ENCODE measurements at regions of chr3 and their contacts with region 1.

Region 1: GRCh38 chr3:157532529-157533297 is 29.5 kb upstream of the VEPH1 start:
- DNase-seq: peak in 1 of 2 experiments; percentile 21
- H3K4me3 ChIP-seq: no peak overlapping the region
- H3K27ac ChIP-seq: peak overlapping the region; percentile 37; the same call in 1 of the 2 replicates
- H3K4me1 ChIP-seq: peaks cover 0 to 3% (median 1%) of the 10 kb centered on the region in 4 experiments; a peak in 2 of 7 replicates
- H3K27me3 ChIP-seq: no peaks in the 10 kb centered on the region
- CTCF ChIP-seq: peak in 2 of 3 experiments; percentile 79 to 80; a peak in 3 of 4 replicates
- EP300 ChIP-seq: no peak
- POLR2A ChIP-seq: no peak
- RAD21 ChIP-seq: peak; percentile 89 to 92

Region 2: DNA sequence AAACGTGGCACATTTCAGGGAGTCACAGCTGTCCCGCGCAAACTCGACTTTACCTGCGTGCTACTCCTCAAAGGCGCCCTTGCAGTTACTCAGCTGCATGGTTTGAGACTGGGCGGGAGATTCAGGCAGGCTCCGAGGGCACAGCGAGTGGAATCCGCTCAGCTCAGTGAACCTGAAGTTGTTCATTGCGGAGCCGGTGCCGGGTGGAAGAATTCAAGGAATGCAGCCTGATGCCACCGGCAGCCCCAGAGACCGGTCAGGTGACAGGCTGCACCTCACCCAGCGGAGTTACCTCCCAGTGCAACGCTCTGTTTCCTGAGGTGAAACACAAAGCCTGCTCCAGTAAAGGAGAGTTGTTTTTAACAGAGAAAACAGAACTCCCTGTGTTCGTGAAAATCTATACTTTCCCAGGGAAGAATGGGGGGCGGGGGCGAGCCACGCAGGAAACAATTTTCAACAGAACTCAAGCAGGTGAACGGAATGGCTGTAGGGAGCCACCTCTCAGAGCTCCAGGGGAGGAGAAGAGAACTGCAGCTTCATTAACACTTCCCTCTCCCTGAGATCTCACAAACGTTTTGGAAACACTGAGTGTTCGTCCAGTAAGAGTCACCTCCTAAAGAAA is 33.3 kb before region 1 on chr3:
- CTCF ChIA-PET with region 1: interaction called, 31 read pairs
- POLR2A ChIA-PET with region 1: interaction called, 6 read pairs
- DNase-seq: peak; percentile 74 to 83
- H3K4me3 ChIP-seq: peak overlapping the region; percentile 48 to 55 (median 50)
- H3K27ac ChIP-seq: peak overlapping the region; percentile 79
- H3K4me1 ChIP-seq: peaks cover 4 to 21% (median 18%) of the 10 kb centered on the region in 4 experiments; a peak in 5 of 7 replicates
- H3K27me3 ChIP-seq: no peaks in the 10 kb centered on the region
- CTCF ChIP-seq: no peak
- EP300 ChIP-seq: peak in 1 of 2 experiments; percentile 65; a peak in 1 of 3 replicates
- POLR2A ChIP-seq: peak in 1 of 2 experiments; percentile 91; a peak in 2 of 3 replicates
- RAD21 ChIP-seq: peak in 1 of 2 experiments; percentile 6; a peak in 2 of 4 replicates

Region 3: DNA sequence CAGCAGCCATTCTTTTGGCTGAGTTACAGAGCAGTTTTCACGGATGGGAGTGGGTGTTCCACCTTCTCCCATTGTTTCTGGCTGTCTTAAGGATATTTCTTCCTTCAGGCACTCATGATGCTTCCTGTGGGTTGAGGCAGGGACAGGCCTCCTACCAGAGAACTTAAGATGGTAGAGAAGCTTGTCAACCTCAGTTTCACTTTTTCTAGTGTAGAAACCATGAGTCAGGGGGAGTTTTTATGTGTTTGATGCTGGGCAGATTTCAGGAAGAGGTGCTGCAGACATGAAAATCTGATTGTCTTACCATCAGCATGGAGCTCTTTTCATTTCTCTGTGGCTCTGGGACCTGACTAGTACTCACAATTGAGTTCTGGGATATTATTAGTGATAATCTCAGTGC is 19.2 kb after region 1 on chr3:
- CTCF ChIA-PET with region 1: interaction called, 10 read pairs
- POLR2A ChIA-PET with region 1: no interaction called
- DNase-seq: no peak
- H3K4me3 ChIP-seq: no peak overlapping the region
- H3K27ac ChIP-seq: no peak overlapping the region
- H3K4me1 ChIP-seq: no peaks in the 10 kb centered on the region
- H3K27me3 ChIP-seq: no peaks in the 10 kb centered on the region
- CTCF ChIP-seq: no peak
- EP300 ChIP-seq: no peak
- POLR2A ChIP-seq: no peak
- RAD21 ChIP-seq: no peak

Region 4: GRCh38 chr3:157572559-157573270 is 40.0 kb after region 1 on chr3:
- CTCF ChIA-PET with region 1: interaction called, 116 read pairs
- POLR2A ChIA-PET with region 1: interaction called, 16 read pairs
- DNase-seq: no peak
- H3K4me3 ChIP-seq: no peak overlapping the region
- H3K27ac ChIP-seq: no peak overlapping the region
- H3K4me1 ChIP-seq: no peaks in the 10 kb centered on the region
- H3K27me3 ChIP-seq: no peaks in the 10 kb centered on the region
- CTCF ChIP-seq: peak in 2 of 3 experiments; percentile 64 to 75; a peak in 3 of 4 replicates
- EP300 ChIP-seq: no peak
- POLR2A ChIP-seq: no peak
- RAD21 ChIP-seq: peak; percentile 68 to 72

Region 5: GRCh38 chr3:157594413-157594812 is 61.7 kb after region 1 on chr3:
- CTCF ChIA-PET with region 1: interaction called, 29 read pairs
- POLR2A ChIA-PET with region 1: no interaction called
- DNase-seq: no peak
- H3K4me3 ChIP-seq: no peak overlapping the region
- H3K27ac ChIP-seq: no peak overlapping the region
- H3K4me1 ChIP-seq: no peaks in the 10 kb centered on the region
- H3K27me3 ChIP-seq: no peaks in the 10 kb centered on the region
- CTCF ChIP-seq: peak; percentile 44 to 55 (median 54)
- EP300 ChIP-seq: no peak
- POLR2A ChIP-seq: no peak
- RAD21 ChIP-seq: peak in 1 of 2 experiments; percentile 34; a peak in 1 of 4 replicates

Region 6: GRCh38 chr3:157652366-157652765 is 119.7 kb after region 1 on chr3:
- CTCF ChIA-PET with region 1: no interaction called
- POLR2A ChIA-PET with region 1: no interaction called
- DNase-seq: no peak
- H3K4me3 ChIP-seq: no peak overlapping the region
- H3K27ac ChIP-seq: no peak overlapping the region
- H3K4me1 ChIP-seq: no peaks in the 10 kb centered on the region
- H3K27me3 ChIP-seq: no peaks in the 10 kb centered on the region
- CTCF ChIP-seq: no peak
- EP300 ChIP-seq: no peak
- POLR2A ChIP-seq: no peak
- RAD21 ChIP-seq: no peak

Region 7: GRCh38 chr3:157916672-157917071 is 384.0 kb after region 1 on chr3:
- CTCF ChIA-PET with region 1: no interaction called
- POLR2A ChIA-PET with region 1: no interaction called
- DNase-seq: no peak
- H3K4me3 ChIP-seq: no peak overlapping the region
- H3K27ac ChIP-seq: no peak overlapping the region
- H3K4me1 ChIP-seq: peaks cover 0 to 3% (median 0%) of the 10 kb centered on the region in 4 experiments; a peak in 1 of 7 replicates
- H3K27me3 ChIP-seq: peaks cover 0 to 1% (median 0%) of the 10 kb centered on the region in 4 experiments; a peak in 1 of 7 replicates
- CTCF ChIP-seq: no peak
- EP300 ChIP-seq: no peak
- POLR2A ChIP-seq: no peak
- RAD21 ChIP-seq: no peak

Measured in H1 (cell line).